ENCODE measurements at regions of chrX and their contacts with region 1.

Region 1: GRCh38 chrX:18210470-18210869 is 10.2 kb downstream of the BEND2 start:
- DNase-seq: peak in 1 of 4 experiments; percentile 9
- ATAC-seq: no peak
- H3K4me3 ChIP-seq: no peak overlapping the region
- H3K27ac ChIP-seq: no peak overlapping the region
- H3K4me1 ChIP-seq: no peaks in the 10 kb centered on the region
- H3K27me3 ChIP-seq: no peaks in the 10 kb centered on the region; a peak in 1 of 5 replicates
- CTCF ChIP-seq: peak in 2 of 3 experiments; percentile 15 to 50; a peak in 3 of 6 replicates
- EP300 ChIP-seq: no peak
- POLR2A ChIP-seq: no peak
- RAD21 ChIP-seq: peak; percentile 31 to 69; a peak in 3 of 4 replicates

Region 2: GRCh38 chrX:17792826-17793225 is 417.6 kb before region 1 on chrX:
- CTCF ChIA-PET with region 1: no interaction called
- POLR2A ChIA-PET with region 1: no interaction called
- in situ Hi-C with region 1: no loop called
- intact Hi-C with region 1: loop called (anchors 10 kb)
- DNase-seq: no peak
- ATAC-seq: no peak
- H3K4me3 ChIP-seq: no peak overlapping the region
- H3K27ac ChIP-seq: no peak overlapping the region
- H3K4me1 ChIP-seq: no peaks in the 10 kb centered on the region
- H3K27me3 ChIP-seq: peaks cover 0 to 6% of the 10 kb centered on the region in 2 experiments; a peak in 1 of 5 replicates
- CTCF ChIP-seq: no peak
- EP300 ChIP-seq: no peak
- POLR2A ChIP-seq: no peak
- RAD21 ChIP-seq: no peak

Region 3: DNA sequence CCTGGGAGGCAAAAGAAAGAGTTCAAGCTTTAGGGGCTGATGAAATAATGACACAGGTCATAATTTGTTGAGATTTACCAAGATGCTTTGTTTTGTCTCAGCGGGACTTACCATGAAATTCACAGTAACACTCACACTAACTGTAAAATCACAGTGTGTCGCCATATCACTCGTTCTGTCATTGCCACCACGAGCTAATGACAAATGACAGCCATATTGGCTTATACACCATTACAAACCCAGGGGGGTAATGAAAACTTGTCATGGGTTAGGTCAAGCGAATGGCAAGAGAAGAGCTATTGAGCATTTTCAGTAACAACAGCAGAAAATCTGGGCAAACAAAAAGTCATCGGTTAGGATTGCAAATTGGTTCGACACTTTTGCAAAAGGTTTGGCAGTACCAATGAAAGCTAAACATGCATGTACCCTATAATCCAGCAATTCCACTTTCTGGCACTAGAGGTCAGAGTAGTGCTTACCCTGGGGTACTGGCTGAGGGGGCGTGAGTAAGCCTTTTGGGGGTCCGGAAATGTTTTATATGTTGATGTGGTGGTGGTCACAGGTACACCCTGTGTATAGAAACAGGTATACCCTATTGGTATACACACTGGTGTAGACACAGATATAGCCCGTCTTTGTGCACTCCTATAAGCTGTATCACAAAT is 265.5 kb before region 1 on chrX:
- CTCF ChIA-PET with region 1: interaction called, 5 read pairs
- POLR2A ChIA-PET with region 1: no interaction called
- in situ Hi-C with region 1: no loop called
- intact Hi-C with region 1: loop called (anchors 5 kb)
- DNase-seq: peak; percentile 18 to 40 (median 24)
- ATAC-seq: peak; percentile 72
- H3K4me3 ChIP-seq: no peak overlapping the region
- H3K27ac ChIP-seq: no peak overlapping the region
- H3K4me1 ChIP-seq: no peaks in the 10 kb centered on the region
- H3K27me3 ChIP-seq: no peaks in the 10 kb centered on the region
- CTCF ChIP-seq: peak; percentile 58 to 69 (median 61)
- EP300 ChIP-seq: no peak
- POLR2A ChIP-seq: no peak
- RAD21 ChIP-seq: peak in 1 of 2 experiments; percentile 61; a peak in 2 of 4 replicates

Measured in K562 (cell line).